MCF 10A (cell line): ENCODE measurements at regions of chr1 and their contacts with region 1.

Region 1: GRCh38 chr1:205658943-205659581 is 21.2 kb downstream of the SLC45A3 start:
- DNase-seq: peak; percentile 90
- H3K4me3 Mint-ChIP-seq: no peak overlapping the region
- H3K27ac Mint-ChIP-seq: no peak overlapping the region
- H3K4me1 Mint-ChIP-seq: peaks cover 1% of the 10 kb centered on the region
- H3K27me3 Mint-ChIP-seq: no peaks in the 10 kb centered on the region
- CTCF ChIP-seq: peak; percentile 99

Region 2: DNA sequence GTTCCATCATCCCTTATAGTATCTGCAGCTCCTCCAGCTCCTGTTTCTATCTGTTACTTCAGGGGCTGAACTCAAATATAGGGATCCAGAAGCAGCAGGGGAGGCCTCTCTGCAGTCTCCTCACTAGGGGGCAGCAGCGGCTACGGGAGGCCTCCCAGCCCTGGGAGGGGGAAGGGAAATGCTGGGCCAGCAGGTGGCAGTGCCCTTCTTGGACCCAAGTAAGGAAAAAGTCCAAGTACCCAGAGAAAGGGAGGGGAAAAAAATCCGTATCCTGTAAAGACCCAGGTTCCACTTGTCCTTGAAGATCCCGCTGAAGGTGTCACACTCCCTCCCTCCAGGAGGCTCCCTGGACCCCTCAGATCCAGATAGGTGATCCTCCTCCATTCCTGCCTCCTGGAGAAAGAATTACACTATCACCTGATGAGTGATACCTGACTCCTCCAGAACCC is 323.4 kb before region 1 on chr1:
- CTCF ChIA-PET with region 1: interaction called, 5 read pairs
- POLR2A ChIA-PET with region 1: no interaction called
- intact Hi-C with region 1: loop called (anchors 1 kb)
- DNase-seq: peak; percentile 97
- H3K4me3 Mint-ChIP-seq: no peak overlapping the region
- H3K27ac Mint-ChIP-seq: no peak overlapping the region
- H3K4me1 Mint-ChIP-seq: peaks cover 4% of the 10 kb centered on the region
- H3K27me3 Mint-ChIP-seq: peaks cover 17% of the 10 kb centered on the region
- CTCF ChIP-seq: peak; percentile 100

Region 3: DNA sequence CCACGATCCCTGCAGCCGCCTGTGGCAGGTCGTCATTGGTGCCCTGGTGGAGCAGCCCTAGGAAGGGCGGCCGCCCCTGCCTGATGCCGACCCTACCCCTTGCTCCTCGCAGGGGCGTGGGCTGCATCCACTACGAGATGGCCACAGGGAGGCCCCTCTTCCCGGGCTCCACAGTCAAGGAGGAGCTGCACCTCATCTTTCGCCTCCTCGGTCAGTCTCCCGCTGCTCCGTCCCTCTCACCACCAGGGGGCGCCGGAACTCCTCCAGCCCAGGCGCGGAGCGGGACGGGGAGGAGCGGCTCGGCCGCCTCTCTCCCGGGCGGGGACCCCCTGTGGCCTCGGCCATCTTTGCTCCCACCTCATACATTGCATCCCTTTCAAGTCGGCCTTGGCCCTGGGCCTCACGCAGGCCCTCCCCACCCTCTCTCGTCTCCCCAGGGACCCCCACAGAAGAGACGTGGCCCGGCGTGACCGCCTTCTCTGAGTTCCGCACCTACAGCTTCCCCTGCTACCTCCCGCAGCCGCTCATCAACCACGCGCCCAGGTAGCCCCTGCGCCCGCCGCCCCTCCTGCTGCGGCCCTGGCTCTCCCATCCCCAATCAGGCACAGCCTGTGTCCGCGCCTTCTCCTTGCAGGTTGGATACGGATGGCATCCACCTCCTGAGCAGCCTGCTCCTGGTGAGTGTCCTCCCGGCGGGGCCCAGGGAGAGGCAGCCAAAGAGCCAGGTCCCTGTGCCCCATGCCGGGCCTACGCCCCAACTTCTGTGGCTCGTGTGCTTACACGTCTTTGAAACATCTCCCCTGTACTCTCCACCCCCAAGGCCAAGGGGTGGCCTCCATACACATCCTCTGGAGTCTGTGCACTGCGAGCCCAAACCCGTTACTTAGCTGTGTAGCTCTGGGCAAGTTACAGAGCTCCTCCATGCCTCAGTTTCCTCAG is 129.9 kb before region 1 on chr1:
- CTCF ChIA-PET with region 1: interaction called, 443 read pairs
- POLR2A ChIA-PET with region 1: interaction called, 8 read pairs
- intact Hi-C with region 1: loop called (anchors 1 kb)
- DNase-seq: peak; percentile 89
- H3K4me3 Mint-ChIP-seq: peak overlapping the region; percentile 32
- H3K27ac Mint-ChIP-seq: no peak overlapping the region
- H3K4me1 Mint-ChIP-seq: peaks cover 6% of the 10 kb centered on the region
- H3K27me3 Mint-ChIP-seq: no peaks in the 10 kb centered on the region
- CTCF ChIP-seq: peak; percentile 100

Region 4: DNA sequence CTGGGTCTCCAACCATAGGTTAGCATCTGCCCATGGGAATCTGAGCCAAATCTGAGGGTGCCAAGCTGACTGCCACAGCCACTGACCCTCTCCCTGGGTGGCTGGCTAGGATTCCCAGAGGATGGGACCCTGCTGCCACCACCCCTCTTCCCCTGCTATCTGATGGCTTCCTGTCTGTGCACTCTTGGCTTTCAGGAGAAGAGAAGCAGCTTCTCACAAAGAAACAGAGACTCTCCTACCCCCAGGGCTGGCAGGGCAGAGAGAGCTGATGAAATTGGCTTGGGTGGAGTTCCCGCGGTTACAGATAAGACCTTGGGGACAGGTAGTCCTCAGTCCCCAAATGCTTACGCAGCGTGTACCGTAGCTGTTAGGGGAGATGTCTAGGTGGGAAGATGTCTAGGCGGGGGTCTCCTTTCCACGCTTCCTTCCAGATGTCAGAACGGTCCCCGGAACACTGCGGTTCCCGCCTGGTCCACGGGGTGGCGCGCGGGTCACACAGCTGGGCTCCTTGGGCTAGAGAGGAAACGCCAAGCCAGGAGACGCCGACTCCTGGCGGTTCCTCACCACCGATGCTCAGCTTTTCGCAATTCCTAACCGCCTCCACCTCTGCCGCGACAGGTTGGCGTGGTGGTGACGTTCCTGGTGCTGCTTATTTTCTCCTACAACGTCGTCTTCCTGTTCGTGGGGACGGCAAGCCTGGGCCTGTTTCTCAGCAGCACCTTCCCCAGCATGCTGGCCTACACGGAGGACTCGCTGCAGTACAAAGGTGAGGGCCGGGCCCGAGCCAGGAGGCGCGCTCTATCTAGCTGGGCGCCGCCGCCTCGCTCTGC is 67.3 kb before region 1 on chr1:
- CTCF ChIA-PET with region 1: interaction called, 918 read pairs
- POLR2A ChIA-PET with region 1: interaction called, 203 read pairs
- intact Hi-C with region 1: loop called (anchors 1 kb)
- DNase-seq: peak; percentile 99
- H3K4me3 Mint-ChIP-seq: peak overlapping the region; percentile 64
- H3K27ac Mint-ChIP-seq: peak overlapping the region; percentile 39
- H3K4me1 Mint-ChIP-seq: peaks cover 18% of the 10 kb centered on the region
- H3K27me3 Mint-ChIP-seq: no peaks in the 10 kb centered on the region
- CTCF ChIP-seq: peak; percentile 100

Region 5: DNA sequence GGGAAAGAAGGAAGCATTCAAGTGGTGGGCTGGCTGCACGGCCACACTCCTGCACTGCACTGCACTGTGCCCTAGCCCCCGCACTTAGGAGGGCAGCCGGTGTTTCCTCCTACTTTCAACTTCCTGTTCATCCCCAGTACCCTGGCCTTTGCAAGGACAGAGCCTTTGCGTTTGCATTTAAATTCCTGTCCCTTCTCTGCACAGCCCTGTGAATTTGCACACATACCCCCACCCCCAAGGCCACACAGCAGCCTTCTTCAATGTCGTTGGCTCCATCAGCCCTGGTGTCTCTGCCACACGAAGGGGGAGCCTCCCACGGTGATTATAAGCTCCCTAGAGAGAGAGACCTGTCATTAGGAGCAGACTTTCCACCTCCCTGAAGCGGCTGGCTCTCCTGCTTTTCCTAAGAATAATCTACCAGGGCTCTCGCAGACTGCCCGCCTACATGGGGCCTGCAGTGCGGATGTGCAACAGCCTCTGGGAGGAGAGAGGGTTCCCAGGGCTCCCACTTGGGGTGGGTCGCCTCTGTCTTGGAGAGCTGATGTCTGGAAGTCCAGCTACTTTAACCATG is 34.4 kb after region 1 on chr1:
- CTCF ChIA-PET with region 1: interaction called, 61 read pairs
- POLR2A ChIA-PET with region 1: interaction called, 3 read pairs
- intact Hi-C with region 1: no loop called
- DNase-seq: no peak
- H3K4me3 Mint-ChIP-seq: no peak overlapping the region
- H3K27ac Mint-ChIP-seq: no peak overlapping the region
- H3K4me1 Mint-ChIP-seq: peaks cover 8% of the 10 kb centered on the region
- H3K27me3 Mint-ChIP-seq: peaks cover 14% of the 10 kb centered on the region
- CTCF ChIP-seq: no peak

Region 6: GRCh38 chr1:205750138-205751035 is 91.3 kb after region 1 on chr1 and contains the start of gene NUCKS1:
- CTCF ChIA-PET with region 1: interaction called, 10 read pairs
- POLR2A ChIA-PET with region 1: interaction called, 4 read pairs
- intact Hi-C with region 1: no loop called
- DNase-seq: peak; percentile 100
- H3K4me3 Mint-ChIP-seq: peak within 1 kb of the TSS; percentile 80
- H3K27ac Mint-ChIP-seq: peak within 1 kb of the TSS; percentile 96
- H3K4me1 Mint-ChIP-seq: peaks cover 15% of the 10 kb centered on the region
- H3K27me3 Mint-ChIP-seq: peaks cover 1% of the 10 kb centered on the region
- CTCF ChIP-seq: no peak
- total RNA-seq, gene NUCKS1: 605 and 615 TPM in 2 replicates

Region 7: GRCh38 chr1:205933671-205934618 is 274.9 kb after region 1 on chr1:
- CTCF ChIA-PET with region 1: interaction called, 11 read pairs
- POLR2A ChIA-PET with region 1: no interaction called
- intact Hi-C with region 1: no loop called
- DNase-seq: peak; percentile 98
- H3K4me3 Mint-ChIP-seq: peak overlapping the region; percentile 2
- H3K27ac Mint-ChIP-seq: peak overlapping the region; percentile 60
- H3K4me1 Mint-ChIP-seq: peaks cover 40% of the 10 kb centered on the region
- H3K27me3 Mint-ChIP-seq: peaks cover 56% of the 10 kb centered on the region
- CTCF ChIP-seq: no peak